ENCODE measurements at regions of chr14 and their contacts with region 1.

Region 1: DNA sequence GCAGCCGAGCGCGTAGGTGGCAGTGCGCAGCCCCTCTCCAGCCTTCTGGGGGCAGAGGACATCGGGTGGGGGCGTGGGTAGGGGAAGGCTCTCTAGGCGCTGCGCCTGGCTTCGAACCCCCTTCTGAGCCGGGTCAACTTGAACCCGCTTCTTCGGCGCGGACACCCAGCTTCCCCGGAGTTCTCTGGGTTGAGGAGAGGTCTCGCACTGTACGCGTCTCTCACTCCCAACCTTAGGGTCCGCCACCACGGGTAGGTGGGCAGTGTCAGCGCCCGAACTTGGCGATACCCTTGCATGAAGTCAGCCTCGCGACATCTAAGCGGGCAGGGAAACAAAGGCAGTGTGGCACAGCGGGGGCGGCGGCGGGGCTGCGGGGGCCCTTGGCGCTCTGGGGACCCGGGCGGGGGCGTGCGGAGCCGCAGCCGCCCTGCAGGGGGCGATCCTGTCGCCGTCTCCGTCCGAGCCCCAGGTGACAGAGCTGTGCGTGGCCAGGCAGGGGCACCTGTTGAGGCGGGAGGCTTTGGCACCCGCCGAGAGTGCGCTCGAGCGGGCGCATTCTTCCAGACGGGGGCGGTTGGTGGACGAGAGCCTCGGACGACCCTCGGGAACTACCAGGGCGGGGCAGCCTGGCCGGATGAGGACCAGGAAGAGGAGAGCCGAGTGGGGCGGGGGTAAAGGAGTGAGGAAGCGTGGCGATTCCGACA is 1.1 kb downstream of the GALNT16 start:
- DNase-seq: peak; percentile 60
- H3K4me3 Mint-ChIP-seq: peak overlapping the region; percentile 63
- H3K27ac Mint-ChIP-seq: no peak overlapping the region
- H3K4me1 Mint-ChIP-seq: peaks cover 6% of the 10 kb centered on the region
- H3K27me3 Mint-ChIP-seq: peaks cover 51% of the 10 kb centered on the region

Region 2: DNA sequence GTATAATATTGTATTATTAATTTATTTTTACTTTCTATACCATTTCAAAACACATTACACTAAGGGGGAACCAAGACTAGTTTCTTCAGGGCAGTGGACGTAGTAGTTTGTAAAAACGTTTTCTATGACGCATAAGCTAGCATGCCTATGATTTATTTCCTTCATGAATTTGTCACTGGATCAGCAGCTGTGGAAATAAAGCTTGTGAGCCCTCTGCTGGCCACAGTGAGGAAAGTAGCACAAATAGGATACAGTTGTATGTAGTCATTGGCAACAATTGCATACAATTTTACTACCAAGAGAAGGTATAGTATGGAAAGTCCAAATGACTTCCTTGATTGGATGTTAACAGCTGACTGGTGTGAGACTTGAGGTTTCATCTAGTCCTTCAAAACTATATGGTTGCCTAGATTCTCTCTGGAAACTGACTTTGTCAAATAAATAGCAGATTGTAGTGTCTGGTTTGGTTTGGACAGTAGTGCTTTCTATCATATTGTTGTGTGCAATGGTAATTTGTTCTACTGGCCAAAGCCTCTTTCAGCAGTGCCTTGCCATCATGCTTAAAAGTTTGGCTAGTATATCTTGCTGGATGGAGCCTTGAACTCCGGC is 199.2 kb after region 1 on chr14:
- CTCF ChIA-PET with region 1: interaction called, 7 read pairs
- intact Hi-C with region 1: loop called (anchors 1 kb)
- DNase-seq: peak; percentile 80
- H3K4me3 Mint-ChIP-seq: no peak overlapping the region
- H3K27ac Mint-ChIP-seq: no peak overlapping the region
- H3K4me1 Mint-ChIP-seq: no peaks in the 10 kb centered on the region
- H3K27me3 Mint-ChIP-seq: no peaks in the 10 kb centered on the region

Region 3: DNA sequence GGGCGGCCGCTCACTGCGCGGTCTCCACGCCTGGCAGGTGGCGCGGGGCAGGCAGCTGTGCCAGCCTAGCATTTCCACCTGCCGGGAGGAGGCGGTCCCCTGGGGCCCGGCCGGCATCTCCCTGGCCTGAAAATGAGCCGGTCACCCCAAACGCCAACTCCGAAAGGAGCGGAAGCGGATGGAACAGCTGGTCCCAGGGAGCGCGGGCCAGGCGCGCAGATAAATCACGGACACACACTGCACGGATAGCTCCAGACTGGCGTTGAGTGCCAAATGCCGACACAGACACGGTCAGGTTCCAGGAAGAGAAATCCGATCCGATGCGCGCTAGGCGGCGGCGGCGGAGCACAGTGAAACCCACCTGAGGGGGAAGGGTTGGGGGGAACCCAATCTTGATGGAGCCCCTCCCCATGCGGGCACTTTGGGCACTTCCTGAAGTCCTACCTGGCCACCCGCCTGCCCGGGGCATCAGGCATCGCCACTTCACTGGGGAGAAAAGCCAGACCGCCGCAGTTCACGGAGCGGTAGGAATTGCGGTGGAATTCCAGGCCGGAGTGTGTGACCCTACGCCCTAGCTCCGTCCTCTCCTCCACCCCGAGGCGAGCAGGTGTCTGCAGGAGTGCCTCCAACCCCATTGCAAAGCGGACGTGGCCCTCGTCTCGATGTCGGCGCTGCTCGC is 222.9 kb after region 1 on chr14:
- CTCF ChIA-PET with region 1: no interaction called
- intact Hi-C with region 1: no loop called
- DNase-seq: no peak
- H3K4me3 Mint-ChIP-seq: no peak overlapping the region
- H3K27ac Mint-ChIP-seq: no peak overlapping the region
- H3K4me1 Mint-ChIP-seq: peaks cover 2% of the 10 kb centered on the region
- H3K27me3 Mint-ChIP-seq: peaks cover 33% of the 10 kb centered on the region

Region 4: DNA sequence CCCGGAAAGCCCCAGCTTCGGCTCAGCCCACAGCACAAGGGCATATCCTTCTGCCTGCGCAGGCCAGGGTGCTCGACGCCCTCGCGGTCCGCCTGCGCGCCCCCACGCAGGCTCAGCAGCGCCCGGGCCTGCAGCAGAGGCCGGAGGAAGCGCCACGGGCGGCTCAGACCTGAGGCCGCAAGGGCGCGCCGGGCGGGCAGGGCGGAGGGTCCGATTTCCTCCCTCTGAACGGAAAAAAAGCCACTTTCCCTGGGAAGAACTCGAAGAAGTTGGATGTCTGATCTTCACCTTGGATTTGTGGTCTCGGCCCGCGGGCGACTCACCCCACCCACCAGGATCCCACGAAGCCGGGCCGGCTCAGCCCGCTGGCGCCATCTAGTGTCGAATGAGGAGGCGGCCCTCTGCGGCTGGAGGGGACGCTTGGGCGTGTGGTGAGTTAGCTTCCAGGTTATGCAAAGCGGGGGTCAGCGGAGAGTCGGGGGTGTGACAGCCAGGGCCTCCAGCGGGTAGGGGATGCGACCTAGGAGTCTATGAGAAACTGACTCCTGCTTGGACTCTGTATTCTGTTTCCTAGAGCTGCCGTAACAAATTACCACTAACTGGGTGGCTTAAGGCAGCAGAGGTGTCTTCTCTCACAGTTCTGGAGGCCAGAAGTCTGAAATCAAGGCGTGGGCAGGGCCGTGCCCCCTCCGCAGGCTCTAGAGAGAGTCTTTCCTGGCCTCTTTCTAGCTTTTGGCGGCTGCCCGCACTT is 465.9 kb after region 1 on chr14:
- CTCF ChIA-PET with region 1: no interaction called
- intact Hi-C with region 1: no loop called
- DNase-seq: peak; percentile 82
- H3K4me3 Mint-ChIP-seq: peak overlapping the region; percentile 38
- H3K27ac Mint-ChIP-seq: no peak overlapping the region
- H3K4me1 Mint-ChIP-seq: peaks cover 12% of the 10 kb centered on the region
- H3K27me3 Mint-ChIP-seq: peaks cover 4% of the 10 kb centered on the region